ENCODE measurements at regions of chr11 and their contacts with region 1.

Region 1: DNA sequence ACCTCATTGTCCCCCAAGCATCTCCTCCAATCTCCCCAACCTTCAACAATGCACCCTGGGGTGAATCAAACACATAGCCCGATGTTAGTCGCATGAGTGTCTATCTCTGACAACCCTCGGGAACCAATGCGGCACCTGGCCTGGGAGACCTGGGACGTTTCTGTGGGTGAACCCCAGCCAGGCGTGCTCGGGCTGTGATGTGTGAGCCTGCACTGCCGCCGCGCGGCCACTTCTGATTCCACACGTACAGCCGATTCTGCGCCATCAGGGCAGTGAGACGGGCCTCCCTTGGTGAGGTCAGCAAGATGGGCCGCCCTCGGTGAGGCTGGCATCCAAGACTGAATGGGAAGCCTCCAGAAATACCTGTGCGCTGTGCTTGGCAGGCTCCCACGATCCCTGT is 5.2 kb upstream of the H19 start:
- DNase-seq: no peak
- H3K4me3 ChIP-seq: no peak overlapping the region
- H3K27me3 ChIP-seq: no peaks in the 10 kb centered on the region
- CTCF ChIP-seq: no peak

Region 2: GRCh38 chr11:1572197-1573076 is 430.4 kb before region 1 on chr11 and contains the start of gene DUSP8:
- CTCF ChIA-PET with region 1: no interaction called
- POLR2A ChIA-PET with region 1: no interaction called
- DNase-seq: no peak
- H3K4me3 ChIP-seq: peak within 1 kb of the TSS; percentile 69
- H3K27me3 ChIP-seq: peaks cover 2% of the 10 kb centered on the region; the same call in 1 of the 2 replicates
- CTCF ChIP-seq: no peak
- polyA plus RNA-seq, gene DUSP8: 1.9 and 3.4 TPM in 2 replicates

Region 3: DNA sequence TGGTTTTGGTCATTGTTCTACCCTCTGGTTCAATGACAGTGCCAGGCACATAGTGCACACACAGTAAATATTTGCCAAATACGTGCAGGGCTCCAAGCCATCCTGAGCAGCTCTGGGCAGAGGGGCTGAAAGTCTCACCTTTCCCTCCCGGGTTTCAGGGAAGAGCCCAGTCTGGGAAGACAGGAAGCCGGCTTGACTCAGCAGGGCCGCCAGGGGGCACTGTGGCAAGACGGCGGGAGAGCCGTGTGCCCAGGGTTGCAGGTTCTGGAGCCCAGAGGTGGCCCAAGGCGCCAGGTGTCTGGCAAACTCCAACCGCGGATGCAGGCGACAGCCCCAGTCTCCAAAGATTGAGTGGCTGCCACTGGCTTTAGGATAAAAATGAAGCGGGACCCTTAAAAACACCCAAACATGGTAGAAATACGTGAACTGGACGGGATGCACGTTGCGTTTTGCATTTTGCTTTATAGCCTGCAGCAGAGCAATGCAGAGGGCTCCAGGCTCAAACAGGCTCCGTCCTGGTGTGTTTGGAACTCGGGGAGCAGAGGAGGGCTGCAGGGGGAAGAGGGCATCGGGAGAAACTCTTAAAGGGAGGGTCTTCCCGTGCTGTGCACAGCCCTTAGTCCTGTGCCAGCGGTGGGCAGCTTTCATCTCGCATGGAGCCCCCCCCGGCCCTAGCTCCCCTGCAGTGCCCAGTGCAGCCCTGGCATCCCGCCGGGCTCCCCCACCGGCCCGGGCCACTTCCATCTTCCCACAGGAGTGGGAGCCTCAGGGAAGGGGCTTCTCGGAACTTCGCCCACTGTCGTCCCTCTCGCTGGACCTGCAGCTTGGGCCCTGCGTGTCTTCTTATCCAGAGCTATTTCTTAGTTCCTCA is 362.5 kb before region 1 on chr11:
- CTCF ChIA-PET with region 1: interaction called, 10 read pairs
- POLR2A ChIA-PET with region 1: no interaction called
- DNase-seq: no peak
- H3K4me3 ChIP-seq: no peak overlapping the region
- H3K27me3 ChIP-seq: peaks cover 5% of the 10 kb centered on the region
- CTCF ChIP-seq: peak; percentile 86

Region 4: DNA sequence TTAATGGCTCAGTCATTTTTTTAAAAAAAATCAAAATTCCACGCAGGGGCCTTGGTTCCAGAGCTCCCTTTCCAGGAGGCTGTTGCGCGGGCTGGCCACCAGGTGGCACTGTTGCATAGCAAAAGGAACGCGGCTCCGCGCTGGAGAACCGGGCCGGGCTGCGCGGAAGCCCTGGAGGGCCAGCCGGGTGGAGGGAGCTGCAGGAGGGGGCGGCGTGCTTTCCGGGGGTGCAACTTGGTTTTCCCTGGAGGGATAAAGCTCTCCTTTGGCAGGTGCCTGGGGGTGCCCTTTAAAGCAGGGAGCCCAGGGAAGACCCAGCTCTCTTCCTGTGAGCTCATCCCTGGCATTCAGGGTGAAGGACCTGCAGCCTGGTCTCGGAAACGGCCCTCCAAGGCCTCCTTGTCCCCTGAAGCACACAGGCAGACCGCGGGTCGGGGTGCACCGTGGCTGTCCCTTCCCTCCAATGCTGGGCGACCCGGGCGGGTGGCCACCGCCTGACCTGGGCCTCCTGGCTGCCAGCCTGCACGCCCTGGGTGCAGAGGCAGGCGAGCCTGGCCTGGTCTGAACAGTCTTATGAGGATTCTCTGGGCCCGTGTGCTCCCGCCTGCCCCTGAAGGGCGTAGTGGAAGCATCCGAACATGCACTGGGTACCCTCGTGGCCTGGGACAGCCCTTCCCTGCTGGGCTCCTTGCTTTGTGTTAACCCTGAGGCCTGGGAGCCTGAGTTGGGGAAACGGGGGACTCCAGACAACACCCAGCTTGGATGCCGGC is 349.9 kb before region 1 on chr11:
- CTCF ChIA-PET with region 1: interaction called, 52 read pairs
- POLR2A ChIA-PET with region 1: no interaction called
- DNase-seq: no peak
- H3K4me3 ChIP-seq: no peak overlapping the region
- H3K27me3 ChIP-seq: peaks cover 6% of the 10 kb centered on the region
- CTCF ChIP-seq: peak; percentile 96

Region 5: GRCh38 chr11:1837171-1838076 is 165.4 kb before region 1 on chr11:
- CTCF ChIA-PET with region 1: interaction called, 79 read pairs
- POLR2A ChIA-PET with region 1: no interaction called
- DNase-seq: no peak
- H3K4me3 ChIP-seq: no peak overlapping the region
- H3K27me3 ChIP-seq: no peaks in the 10 kb centered on the region; the same call in 1 of the 2 replicates
- CTCF ChIP-seq: peak; percentile 93

Region 6: GRCh38 chr11:1876361-1877063 is 126.3 kb before region 1 on chr11:
- CTCF ChIA-PET with region 1: interaction called, 42 read pairs
- POLR2A ChIA-PET with region 1: no interaction called
- DNase-seq: no peak
- H3K4me3 ChIP-seq: no peak overlapping the region
- H3K27me3 ChIP-seq: no peaks in the 10 kb centered on the region; the same call in 1 of the 2 replicates
- CTCF ChIP-seq: peak; percentile 70

Region 7: DNA sequence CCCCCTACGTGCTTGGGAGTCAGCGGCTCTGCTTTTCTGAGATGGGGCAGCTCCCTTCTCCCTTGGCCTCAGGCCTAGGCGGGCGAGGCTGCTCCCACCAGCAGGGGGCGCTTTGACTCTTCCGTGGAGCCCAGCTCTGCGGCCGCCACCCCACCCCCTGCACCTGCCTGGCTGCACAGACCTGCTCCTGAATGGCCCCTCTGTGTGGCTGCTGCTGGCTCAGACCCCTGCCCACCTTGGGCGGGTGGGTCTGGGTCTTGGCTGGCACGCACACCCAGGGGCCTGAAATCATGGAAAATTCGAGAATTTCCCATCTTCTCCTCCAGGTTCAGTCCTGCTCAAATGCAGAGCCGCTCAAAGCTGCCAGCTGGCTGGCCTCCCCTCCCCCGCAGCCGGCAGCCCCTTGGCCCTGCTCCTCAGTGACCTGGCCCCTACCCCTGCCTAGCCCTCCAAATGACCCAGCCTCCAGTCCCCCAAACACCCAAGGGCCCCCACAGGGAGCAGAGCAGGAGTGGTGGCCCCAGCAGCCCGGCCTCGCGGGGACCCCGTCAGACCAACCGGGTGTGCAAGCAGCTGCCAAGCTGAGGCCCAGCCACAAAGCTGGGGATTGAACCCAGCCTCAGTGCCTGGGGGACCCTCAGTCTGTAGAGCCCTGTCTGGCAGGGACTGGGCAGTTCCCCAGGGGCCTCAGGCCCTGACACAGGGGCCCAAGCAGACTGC is 120.1 kb before region 1 on chr11:
- CTCF ChIA-PET with region 1: interaction called, 42 read pairs
- POLR2A ChIA-PET with region 1: no interaction called
- DNase-seq: no peak
- H3K4me3 ChIP-seq: no peak overlapping the region
- H3K27me3 ChIP-seq: no peaks in the 10 kb centered on the region; the same call in none of the 2 replicates
- CTCF ChIP-seq: peak; percentile 94

Region 8: DNA sequence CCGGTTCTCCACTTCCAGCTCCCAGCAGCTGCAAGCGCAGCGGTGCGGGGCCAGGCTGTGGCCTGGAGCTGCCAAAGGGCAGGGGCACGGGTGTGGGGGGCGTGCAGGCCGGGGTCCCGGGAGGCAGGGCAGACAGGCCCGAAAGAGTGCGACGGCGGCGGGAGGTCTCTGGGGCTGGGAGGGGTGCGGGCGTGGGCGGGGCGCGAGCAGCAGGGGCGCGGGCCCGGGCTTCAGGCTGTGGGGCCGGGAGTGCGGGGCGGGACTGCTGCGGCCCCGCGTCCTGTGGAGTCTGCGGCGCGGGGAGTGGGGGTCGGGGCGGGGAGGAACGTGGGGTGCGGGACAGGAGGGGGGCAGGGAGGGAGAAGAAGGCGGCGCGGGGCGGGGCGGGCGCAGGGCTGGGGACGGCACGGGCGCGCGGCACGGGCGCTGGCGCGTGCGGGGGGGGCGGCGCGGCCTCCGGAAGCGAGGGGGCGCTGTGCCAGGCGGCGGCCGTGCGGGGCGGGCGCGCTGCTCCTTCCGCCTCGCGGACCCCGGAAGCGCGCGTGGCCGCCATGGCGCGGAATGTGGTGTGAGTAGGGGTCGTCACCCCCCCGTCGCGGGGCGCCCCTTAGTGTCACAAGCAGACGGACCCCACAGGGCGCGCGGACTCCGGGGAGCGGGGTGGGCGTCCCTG is 55.9 kb before region 1 on chr11 and contains the start of gene MRPL23:
- CTCF ChIA-PET with region 1: interaction called, 18 read pairs
- POLR2A ChIA-PET with region 1: no interaction called
- DNase-seq: no peak
- H3K4me3 ChIP-seq: no peak within 1 kb of the TSS
- H3K27me3 ChIP-seq: no peaks in the 10 kb centered on the region
- CTCF ChIP-seq: no peak
- polyA plus RNA-seq, gene MRPL23: 39.8 and 43.5 TPM in 2 replicates

Region 9: GRCh38 chr11:2120359-2121100 is 117.7 kb after region 1 on chr11:
- CTCF ChIA-PET with region 1: no interaction called
- POLR2A ChIA-PET with region 1: no interaction called
- DNase-seq: no peak
- H3K4me3 ChIP-seq: no peak overlapping the region
- H3K27me3 ChIP-seq: no peaks in the 10 kb centered on the region
- CTCF ChIP-seq: peak; percentile 36; the same call in 1 of the 2 replicates